Heart right ventricle (tissue), 16 donors: ENCODE measurements at regions of chr6 and their contacts with region 1.

Region 1: DNA sequence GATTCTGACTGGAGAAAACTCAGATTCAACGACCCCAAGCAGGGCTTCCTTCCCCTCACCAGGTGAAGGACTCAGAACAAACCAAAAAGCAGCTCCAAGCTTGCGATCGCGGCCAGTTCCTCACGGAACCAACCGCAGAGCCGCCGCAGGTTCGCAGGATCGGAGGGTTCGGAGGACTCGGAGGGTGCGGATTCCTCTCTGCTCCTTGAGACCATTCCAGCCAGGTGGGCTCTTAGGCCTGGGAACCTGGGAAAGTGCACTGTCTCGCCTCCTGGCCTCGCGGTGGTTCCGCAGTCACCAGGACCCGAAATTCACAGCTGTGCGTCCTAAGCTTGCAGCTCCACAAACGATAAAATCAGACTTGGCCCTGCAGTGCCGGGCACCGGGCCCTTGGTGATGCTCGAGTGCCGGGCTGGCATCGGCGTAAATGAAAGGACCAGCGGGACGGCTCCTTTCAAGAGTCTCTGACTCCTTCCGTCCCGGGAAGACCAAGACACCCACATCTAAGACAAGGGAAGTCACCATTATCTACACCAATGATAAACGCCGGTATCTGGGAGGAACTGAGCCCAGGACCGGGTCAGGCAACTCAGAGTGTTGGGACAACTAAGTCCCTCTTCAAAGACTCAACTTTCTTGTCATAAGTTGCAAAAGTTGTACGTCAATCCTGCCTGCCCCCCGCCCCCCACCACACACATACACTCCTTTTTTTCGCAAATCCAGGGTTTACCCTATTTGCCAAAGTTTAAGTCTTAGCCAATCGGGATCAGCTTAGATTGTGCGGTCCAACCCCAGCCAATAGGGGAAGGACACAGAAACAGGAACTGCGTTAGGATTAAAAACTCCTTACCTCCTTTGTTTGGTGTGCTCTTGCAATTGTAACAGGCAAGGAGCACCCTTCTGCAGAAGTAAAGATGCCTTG is 69.8 kb upstream of the PRSS16 start:
- DNase-seq: peak; percentile 62 to 65
- ATAC-seq: peak; percentile 73 to 94 (median 86)
- H3K4me3 ChIP-seq: peak overlapping the region; percentile 73 to 100 (median 87)
- H3K27ac ChIP-seq: peak overlapping the region in 9 of 10 donors; percentile 23 to 84 (median 61)
- H3K4me1 ChIP-seq: peaks cover 0 to 20% (median 7%) of the 10 kb centered on the region in 9 donors
- H3K27me3 ChIP-seq: peaks cover 0 to 16% (median 8%) of the 10 kb centered on the region in 7 donors
- CTCF ChIP-seq: peak in 7 of 9 donors; percentile 19 to 62 (median 48)

Region 2: GRCh38 chr6:27503436-27504030 is 325.8 kb after region 1 on chr6:
- intact Hi-C with region 1: loop called in 1 of 10 experiments (anchors 10 kb)
- DNase-seq: peak; percentile 54 to 64
- ATAC-seq: peak; percentile 76 to 91 (median 89)
- H3K4me3 ChIP-seq: peak overlapping the region; percentile 5 to 60 (median 51)
- H3K27ac ChIP-seq: no peak overlapping the region
- H3K4me1 ChIP-seq: peaks cover 0 to 17% (median 9%) of the 10 kb centered on the region in 9 donors
- H3K27me3 ChIP-seq: peaks cover 0 to 42% (median 18%) of the 10 kb centered on the region in 7 donors
- CTCF ChIP-seq: no peak

Region 3: DNA sequence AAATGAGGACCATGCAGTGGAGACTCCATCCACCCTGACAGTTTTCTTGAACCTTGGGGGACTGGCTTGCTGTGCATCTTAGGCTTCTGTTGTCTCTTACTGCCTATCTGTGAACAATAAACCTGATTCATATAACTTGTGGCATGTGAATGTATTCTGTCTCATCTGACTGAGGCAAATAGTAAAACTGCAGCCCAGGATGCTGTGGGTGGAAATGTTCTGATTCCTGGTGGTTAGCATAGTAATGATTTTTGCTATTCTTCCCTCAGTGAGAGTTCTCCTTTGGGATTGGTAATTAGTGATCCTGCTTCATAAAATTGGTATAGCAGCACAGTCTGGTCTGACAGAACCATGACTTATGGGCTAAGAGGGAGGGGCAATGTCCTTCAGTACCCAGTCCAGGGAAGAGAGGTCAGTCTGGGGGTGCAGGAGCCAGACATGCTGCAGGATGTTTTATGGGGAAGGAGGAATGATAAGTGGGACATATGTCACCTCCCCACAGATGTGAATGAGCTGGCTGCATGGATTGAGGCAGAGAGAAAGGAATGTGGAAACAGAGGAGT is 587.4 kb after region 1 on chr6:
- intact Hi-C with region 1: no loop called
- DNase-seq: no peak
- ATAC-seq: no peak
- H3K4me3 ChIP-seq: no peak overlapping the region
- H3K27ac ChIP-seq: no peak overlapping the region
- H3K4me1 ChIP-seq: peaks cover 0 to 6% (median 0%) of the 10 kb centered on the region in 9 donors
- H3K27me3 ChIP-seq: peaks cover 7 to 92% (median 73%) of the 10 kb centered on the region in 7 donors
- CTCF ChIP-seq: no peak